Tibial artery (tissue), 4 donors: ENCODE measurements at regions of chr16 and their contacts with region 1.

Region 1: DNA sequence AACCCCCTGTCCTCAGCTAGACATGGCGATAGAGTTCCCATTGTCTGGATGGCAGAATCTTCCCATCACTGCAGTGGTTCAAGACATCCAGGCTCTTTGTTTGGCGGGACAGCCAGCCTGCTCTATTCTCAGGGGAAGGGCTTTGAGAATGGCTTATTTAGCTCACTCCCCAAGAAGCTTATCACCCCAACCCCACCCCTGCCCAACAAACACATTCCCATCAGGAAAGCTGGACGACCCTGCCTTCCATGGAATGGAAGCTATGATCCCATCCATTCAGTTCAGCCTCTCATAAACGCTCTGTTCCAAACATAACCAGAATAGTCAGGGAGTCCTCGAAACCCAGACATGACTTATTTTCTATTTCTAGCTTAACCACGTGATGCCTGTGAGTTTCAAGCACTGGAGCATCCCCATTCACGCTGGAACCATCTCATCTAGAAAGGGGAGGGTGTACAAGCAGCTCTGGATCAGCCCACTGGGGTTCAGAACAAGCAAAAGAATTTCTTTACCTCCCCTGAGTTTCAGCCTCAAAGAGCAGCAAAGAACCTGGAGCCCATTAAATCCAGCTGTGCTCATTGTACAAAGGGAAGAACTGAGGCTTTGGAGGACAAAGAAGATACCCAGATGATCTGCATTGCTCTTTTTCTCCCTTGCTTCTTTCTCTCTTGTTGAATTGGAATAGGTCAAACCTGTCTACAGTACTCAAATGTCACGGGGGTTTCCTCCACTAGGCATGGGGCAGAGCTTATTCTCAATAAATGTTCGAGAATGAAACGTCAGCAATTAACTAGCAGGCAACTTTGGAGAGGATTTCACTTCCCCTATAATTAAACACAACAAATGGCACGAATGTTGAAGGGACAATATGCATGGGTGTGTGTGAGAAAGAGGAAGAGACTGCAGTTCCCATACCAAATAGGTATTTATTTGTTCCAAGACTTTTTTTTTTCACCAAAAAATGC is 93.1 kb downstream of the XYLT1 start:
- DNase-seq: no peak
- H3K4me3 ChIP-seq: no peak overlapping the region
- H3K27ac ChIP-seq: peak overlapping the region; percentile 53 to 63
- H3K4me1 ChIP-seq: peaks cover 0 to 44% (median 39%) of the 10 kb centered on the region in 4 donors
- H3K27me3 ChIP-seq: no peaks in the 10 kb centered on the region
- CTCF ChIP-seq: no peak

Region 2: DNA sequence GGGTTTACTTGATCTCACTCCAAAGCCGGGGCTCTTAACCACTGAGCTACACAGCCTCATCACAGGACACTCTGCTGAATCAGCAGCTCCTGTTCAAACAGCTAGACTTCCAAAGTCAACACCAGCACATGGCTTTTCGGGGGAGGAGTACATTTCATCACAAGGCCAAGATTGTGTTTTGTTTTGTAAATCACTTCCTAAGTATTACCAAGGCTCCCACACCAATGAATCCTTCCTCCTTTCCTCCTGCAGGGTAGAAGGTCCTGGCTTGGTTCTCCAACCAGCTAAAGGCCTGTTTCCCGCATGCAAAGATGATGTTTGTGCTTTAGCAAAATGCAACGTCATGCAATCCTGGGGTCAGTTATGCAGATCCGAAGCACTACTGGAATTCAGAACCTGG is 59.4 kb before region 1 on chr16:
- intact Hi-C with region 1: loop called (anchors 2 kb)
- DNase-seq: peak in 1 of 2 donors; percentile 49
- H3K4me3 ChIP-seq: no peak overlapping the region
- H3K27ac ChIP-seq: no peak overlapping the region
- H3K4me1 ChIP-seq: peaks cover 0 to 21% (median 14%) of the 10 kb centered on the region in 4 donors
- H3K27me3 ChIP-seq: no peaks in the 10 kb centered on the region
- CTCF ChIP-seq: no peak